Transverse colon (tissue), 4 donors: ENCODE measurements at regions of chr4 and their contacts with region 1.

Region 1: DNA sequence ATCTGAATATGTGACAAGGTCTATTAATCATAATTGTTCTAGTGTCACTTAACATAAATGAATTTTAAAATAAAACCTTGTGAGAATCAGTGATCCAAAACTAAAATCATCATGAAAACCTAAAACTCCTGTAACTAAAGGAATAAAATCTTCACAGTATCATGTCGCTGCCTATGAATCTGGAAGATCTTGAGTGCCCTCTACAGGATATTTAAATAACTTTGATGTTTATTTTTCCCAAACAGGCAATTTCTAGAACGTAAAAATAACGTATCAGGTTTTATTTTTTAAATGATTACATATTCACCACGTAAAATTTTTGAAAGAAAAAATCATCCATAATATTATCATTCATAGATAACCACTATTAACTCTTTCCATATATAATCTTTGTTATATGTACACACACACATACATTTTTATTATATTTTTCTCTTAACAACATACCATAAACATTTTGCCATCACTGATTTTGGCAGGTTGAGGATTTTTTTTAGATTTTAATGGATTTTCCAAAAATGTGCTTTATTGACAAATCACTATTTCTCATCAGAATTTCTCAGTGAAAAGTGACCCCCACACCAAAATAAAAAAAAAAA is 79.6 kb downstream of the COMMD8 start:
- DNase-seq: no peak
- H3K4me3 ChIP-seq: no peak overlapping the region
- H3K27ac ChIP-seq: no peak overlapping the region
- H3K4me1 ChIP-seq: no peaks in the 10 kb centered on the region
- H3K27me3 ChIP-seq: no peaks in the 10 kb centered on the region
- CTCF ChIP-seq: peak; percentile 38 to 56 (median 40)
- EP300 ChIP-seq: no peak
- POLR2A ChIP-seq: no peak

Region 2: DNA sequence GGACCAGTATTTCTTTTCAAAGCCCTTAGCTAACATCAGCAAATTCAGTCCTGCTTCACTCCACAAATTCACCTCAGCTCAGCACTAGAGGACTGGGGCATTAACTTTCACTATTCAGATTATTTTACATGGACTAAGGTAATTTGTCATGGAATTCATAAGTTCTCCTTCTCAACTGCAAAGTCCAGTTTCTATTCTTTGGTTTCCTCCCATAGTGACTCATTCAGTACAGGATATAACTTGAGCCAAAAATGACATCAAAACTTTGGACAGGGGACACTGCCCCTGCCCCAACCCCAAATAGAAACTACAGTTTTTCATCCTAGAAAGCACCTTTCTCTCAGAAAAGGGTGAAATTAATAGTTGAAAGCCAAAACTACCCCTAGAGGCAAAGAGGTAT is 527.6 kb before region 1 on chr4:
- in situ Hi-C with region 1: loop called in 1 of 4 experiments (anchors 25 kb)
- intact Hi-C with region 1: no loop called
- DNase-seq: no peak
- H3K4me3 ChIP-seq: no peak overlapping the region
- H3K27ac ChIP-seq: no peak overlapping the region
- H3K4me1 ChIP-seq: no peaks in the 10 kb centered on the region
- H3K27me3 ChIP-seq: no peaks in the 10 kb centered on the region
- CTCF ChIP-seq: no peak
- EP300 ChIP-seq: no peak
- POLR2A ChIP-seq: no peak

Region 3: DNA sequence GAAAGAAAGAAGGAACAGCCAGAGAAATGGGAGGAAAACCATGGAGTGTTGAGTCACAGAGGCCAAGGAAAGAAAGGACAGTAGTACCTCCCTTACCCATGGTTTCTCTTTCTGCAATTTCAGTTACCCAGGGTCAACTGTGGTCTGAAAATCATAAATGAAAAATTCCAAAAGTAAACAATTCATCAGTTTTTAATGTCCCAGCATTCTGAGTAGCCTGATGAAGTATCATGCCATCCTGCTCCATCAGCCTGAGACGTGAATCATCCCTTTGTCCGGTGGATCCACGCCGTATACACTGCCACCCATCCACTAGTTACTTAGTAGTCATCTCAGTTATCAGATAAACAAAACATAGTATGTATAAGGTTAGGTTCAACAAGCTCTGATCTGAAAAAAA is 34.6 kb before region 1 on chr4:
- in situ Hi-C with region 1: no loop called
- intact Hi-C with region 1: no loop called
- DNase-seq: no peak
- H3K4me3 ChIP-seq: no peak overlapping the region
- H3K27ac ChIP-seq: no peak overlapping the region
- H3K4me1 ChIP-seq: no peaks in the 10 kb centered on the region
- H3K27me3 ChIP-seq: no peaks in the 10 kb centered on the region
- CTCF ChIP-seq: no peak
- EP300 ChIP-seq: no peak
- POLR2A ChIP-seq: no peak